RWPE1 (cell line): ENCODE measurements at regions of chr15 and their contacts with region 1.

Region 1: GRCh38 chr15:31128919-31129768 is 27.6 kb upstream of the TRPM1 start:
- DNase-seq: peak; percentile 51
- H3K27ac ChIP-seq: no peak overlapping the region
- CTCF ChIP-seq: peak; percentile 98

Region 2: DNA sequence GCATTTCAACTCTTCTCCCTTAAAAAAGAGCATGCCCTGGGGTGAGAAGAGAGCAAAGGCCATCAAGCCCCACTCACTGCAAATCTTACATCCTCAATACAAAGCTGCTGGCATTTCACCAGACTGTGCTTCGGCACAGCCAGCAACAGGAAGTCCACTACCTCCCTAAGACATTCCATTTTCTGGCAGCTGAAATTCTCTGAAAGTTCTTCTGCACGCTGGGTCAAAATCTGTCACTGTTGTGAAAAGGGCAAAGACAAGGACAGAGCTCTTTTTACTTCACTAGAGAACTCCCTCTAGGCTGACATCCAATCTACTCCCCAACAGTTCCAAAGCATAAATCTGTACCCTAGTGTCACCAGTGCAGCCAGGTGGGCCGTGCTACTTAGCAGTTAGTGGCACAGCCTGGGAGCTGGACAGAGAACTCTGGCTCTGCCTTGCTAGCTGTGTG is 144.0 kb before region 1 on chr15:
- CTCF ChIA-PET with region 1: interaction called, 10 read pairs
- POLR2A ChIA-PET with region 1: no interaction called
- DNase-seq: no peak
- H3K27ac ChIP-seq: no peak overlapping the region; the same call in 1 of the 2 replicates
- CTCF ChIP-seq: no peak

Region 3: GRCh38 chr15:31010036-31010435 is 119.1 kb before region 1 on chr15:
- CTCF ChIA-PET with region 1: no interaction called
- POLR2A ChIA-PET with region 1: no interaction called
- DNase-seq: no peak
- H3K27ac ChIP-seq: no peak overlapping the region
- CTCF ChIP-seq: no peak

Region 4: DNA sequence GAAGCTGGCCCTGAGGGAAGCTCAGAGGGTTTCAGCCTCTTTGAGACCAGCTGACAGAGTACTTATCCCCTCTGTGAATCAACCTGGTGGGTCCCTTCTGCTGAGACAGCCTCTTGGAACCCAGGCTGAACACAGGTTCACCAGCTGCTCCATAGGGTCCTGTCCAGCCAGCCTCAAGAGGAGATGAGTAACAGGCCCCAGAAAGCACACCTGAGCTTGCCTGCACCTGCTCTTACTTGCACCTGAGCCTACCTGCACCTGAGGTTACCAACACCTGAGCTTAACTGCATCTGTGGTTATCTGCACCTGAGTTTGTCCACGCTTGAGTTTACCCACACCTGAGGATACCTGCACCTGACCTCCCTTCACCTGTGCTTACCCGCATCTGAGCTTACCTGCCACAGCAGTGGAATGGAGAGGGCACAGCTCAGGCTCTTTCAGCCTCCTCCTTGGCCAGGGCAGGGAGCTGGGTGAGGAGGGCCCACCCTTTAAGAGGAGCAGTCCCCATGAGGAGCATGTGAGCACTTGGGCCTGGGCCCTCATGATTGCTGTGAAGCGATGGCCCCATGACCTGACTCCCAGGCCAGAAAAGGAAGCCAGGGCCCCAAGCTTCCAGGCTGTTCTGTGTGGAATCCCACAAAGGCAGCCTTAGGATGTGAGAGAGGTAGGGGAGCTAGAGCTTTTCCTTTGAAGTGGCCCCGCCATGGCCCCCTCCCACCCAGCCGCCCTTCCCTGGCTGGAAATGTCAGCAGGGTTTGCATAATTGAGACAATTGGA is 27.7 kb before region 1 on chr15 and contains the start of gene TRPM1:
- CTCF ChIA-PET with region 1: interaction called, 10 read pairs
- POLR2A ChIA-PET with region 1: no interaction called
- DNase-seq: no peak
- H3K27ac ChIP-seq: no peak within 1 kb of the TSS
- CTCF ChIP-seq: no peak